Posterior vena cava (tissue), 2 donors: ENCODE measurements at regions of chr16 and their contacts with region 1.

Region 1: GRCh38 chr16:4200000-4200780 is 41.7 kb downstream of the SRL start:
- DNase-seq: peak; percentile 88

Region 2: DNA sequence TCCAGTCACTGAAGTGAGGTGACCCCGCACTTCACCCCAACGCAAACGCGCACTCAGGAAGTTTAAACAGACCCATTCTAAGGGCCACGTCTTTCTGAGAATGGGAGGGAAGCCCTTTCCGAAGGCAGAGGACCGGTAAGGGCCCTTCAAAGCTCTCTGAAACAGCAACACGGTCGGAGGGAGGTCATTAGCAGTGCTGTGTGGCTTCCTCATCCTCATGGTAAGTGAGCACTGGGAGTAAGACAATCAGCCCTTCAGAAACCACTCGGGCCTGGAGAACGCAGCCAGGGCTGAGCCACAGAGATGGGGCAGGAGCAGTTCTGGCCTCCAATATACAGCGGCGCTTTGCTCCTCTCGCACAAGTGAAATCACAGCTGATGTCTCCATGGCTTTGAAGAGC is 18.0 kb after region 1 on chr16:
- intact Hi-C with region 1: no loop called
- DNase-seq: no peak

Region 3: GRCh38 chr16:4244254-4245076 is 44.3 kb after region 1 on chr16:
- intact Hi-C with region 1: loop called in 1 of 2 experiments (anchors 5 kb)
- DNase-seq: no peak

Region 4: DNA sequence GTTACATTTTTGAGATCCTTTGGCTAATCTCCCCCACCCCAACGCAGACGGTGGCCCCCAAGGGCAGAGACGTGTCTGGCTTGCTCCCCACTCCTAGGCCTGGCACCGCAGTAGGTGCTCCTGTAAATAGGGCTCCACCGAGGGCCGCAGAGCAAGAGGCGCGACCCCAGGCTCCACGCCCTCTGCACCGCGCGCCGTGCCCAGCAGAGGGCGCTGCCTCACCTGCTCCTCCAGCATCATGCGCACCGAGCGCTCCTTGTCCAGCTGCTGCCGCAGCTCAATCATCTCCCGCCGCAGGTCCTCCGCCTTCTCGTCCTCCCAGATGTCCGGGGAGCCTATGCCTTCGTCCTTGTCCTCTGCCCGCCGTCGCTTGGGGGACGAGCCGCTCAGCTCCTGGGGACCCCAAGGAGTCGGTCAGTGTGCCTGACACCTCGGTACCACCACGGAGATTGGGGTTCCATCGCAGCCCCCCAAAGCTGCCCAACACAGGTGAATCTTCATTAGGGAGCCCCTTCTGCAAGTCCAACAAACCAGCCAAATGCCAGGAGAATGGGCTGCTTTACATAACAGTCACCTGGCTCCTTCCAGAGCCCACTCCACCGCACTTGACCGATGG is 61.5 kb after region 1 on chr16:
- intact Hi-C with region 1: loop called in 1 of 2 experiments (anchors 5 kb)
- DNase-seq: no peak